Mammary epithelial cell (primary cell): ENCODE measurements at regions of chrX and their contacts with region 1.

Region 1: DNA sequence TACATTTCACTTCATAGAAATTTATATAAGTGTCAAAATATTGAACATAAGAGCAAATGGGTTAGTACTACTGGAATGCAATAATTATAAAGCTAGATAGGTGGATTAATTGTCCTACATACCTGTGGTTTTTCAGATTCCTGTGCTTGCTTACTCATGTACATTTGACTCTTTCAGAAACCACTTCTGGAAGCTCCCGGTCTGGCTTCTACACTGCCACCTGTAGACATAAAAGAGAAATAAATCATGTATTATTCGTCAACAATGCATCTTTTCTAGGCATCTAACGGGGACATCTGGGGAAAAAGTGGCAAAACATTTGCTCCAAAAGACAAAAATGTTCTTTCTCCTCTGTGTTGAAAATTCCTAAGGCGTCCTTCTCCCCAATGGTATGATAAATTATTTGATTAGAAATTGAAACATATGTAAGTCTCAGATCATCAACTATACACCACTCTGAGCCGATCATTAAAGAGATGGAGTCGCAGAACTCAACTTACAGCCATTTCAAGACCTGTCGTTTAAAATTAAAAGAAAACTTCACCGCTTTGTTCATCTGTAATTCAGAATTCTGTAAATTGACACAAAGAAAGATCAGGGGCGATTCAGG is 648.7 kb upstream of the DIPK2B start:
- DNase-seq: peak; percentile 84
- H3K4me3 ChIP-seq: peak overlapping the region; percentile 34 to 78 (median 77)
- H3K27ac ChIP-seq: peak overlapping the region; percentile 56
- H3K4me1 ChIP-seq: peaks cover 32% of the 10 kb centered on the region
- H3K27me3 ChIP-seq: no peaks in the 10 kb centered on the region
- CTCF ChIP-seq: peak; percentile 36 to 61

Region 2: GRCh38 chrX:46184749-46185148 is 335.4 kb after region 1 on chrX:
- CTCF ChIA-PET with region 1: no interaction called
- dilution Hi-C with region 1: no loop called
- in situ Hi-C with region 1: no loop called
- intact Hi-C with region 1: loop called (anchors 5 kb)
- DNase-seq: peak; percentile 87
- H3K4me3 ChIP-seq: no peak overlapping the region
- H3K27ac ChIP-seq: peak overlapping the region; percentile 75
- H3K4me1 ChIP-seq: peaks cover 48% of the 10 kb centered on the region
- H3K27me3 ChIP-seq: no peaks in the 10 kb centered on the region
- CTCF ChIP-seq: no peak

Region 3: GRCh38 chrX:46260513-46260912 is 411.2 kb after region 1 on chrX:
- CTCF ChIA-PET with region 1: no interaction called
- dilution Hi-C with region 1: no loop called
- in situ Hi-C with region 1: loop called in 1 of 2 experiments (anchors 25 kb)
- intact Hi-C with region 1: loop called (anchors 5 kb)
- DNase-seq: peak; percentile 97
- H3K4me3 ChIP-seq: no peak overlapping the region
- H3K27ac ChIP-seq: peak overlapping the region; percentile 98
- H3K4me1 ChIP-seq: peaks cover 60% of the 10 kb centered on the region
- H3K27me3 ChIP-seq: no peaks in the 10 kb centered on the region
- CTCF ChIP-seq: peak in 1 of 2 donors; percentile 12

Region 4: DNA sequence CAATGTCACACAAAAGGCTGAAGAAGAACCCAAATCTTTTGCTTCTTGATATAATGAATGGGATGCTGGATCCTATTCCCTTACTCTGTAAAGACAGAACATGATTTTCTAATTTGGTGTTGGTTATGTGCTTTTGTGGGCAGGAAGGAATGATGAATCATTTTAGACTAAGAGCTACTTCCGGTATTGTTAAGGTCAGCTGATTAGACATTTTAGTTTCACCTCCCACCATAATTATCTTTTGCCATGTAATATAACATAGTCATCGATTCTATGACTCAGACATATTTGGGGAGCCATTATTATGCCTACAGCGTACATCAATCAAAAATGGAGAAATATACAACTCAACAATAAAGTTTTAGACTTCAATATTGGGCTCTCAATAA is 430.6 kb after region 1 on chrX:
- CTCF ChIA-PET with region 1: no interaction called
- dilution Hi-C with region 1: no loop called
- in situ Hi-C with region 1: no loop called
- intact Hi-C with region 1: loop called (anchors 1 kb)
- DNase-seq: peak; percentile 78
- H3K4me3 ChIP-seq: no peak overlapping the region
- H3K27ac ChIP-seq: peak overlapping the region; percentile 69
- H3K4me1 ChIP-seq: peaks cover 11% of the 10 kb centered on the region
- H3K27me3 ChIP-seq: no peaks in the 10 kb centered on the region
- CTCF ChIP-seq: no peak

Region 5: DNA sequence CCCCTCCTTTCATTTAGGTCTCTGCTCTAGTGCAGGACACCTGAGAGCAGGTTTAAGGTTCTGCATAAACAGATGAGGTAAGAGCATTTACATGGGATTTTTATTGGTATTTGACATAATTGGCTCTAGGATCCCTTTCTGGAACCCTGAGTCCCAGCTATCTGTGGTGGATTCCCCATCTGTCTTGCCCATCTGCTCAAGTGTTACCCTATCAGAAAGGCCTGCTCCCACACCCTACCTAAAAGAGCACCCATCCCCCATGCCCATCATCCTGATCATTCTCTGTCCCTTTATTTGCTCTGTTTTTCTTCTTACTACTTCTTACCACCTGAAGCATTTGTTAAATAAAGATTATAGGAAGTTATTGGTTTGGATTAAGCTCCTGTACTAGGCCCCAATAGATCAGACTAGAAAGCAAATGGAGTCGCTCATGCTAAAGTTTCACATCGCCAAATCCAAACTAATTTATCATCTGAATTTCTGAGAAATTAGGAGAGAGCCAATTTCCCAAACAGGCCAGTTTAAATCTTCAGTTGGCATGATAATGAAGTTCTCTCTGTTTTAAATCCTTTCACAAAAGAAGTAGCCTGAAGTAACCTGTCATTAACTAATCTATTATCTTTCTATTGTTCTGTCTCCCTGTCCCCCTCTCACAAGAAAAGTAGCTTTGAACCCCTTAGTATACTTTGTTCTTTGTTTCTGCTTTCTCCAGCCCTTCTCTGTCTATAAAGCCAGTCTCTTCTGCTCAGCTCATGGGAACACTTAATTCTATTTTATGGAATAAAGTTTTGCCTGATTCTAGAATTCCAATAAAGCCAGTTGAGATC is 517.2 kb after region 1 on chrX:
- CTCF ChIA-PET with region 1: no interaction called
- dilution Hi-C with region 1: no loop called
- in situ Hi-C with region 1: loop called (anchors 25 kb)
- intact Hi-C with region 1: no loop called
- DNase-seq: no peak
- H3K4me3 ChIP-seq: no peak overlapping the region
- H3K27ac ChIP-seq: no peak overlapping the region
- H3K4me1 ChIP-seq: no peaks in the 10 kb centered on the region
- H3K27me3 ChIP-seq: no peaks in the 10 kb centered on the region
- CTCF ChIP-seq: no peak